B cell (primary cell): ENCODE measurements at regions of chr15 and their contacts with region 1.

Region 1: DNA sequence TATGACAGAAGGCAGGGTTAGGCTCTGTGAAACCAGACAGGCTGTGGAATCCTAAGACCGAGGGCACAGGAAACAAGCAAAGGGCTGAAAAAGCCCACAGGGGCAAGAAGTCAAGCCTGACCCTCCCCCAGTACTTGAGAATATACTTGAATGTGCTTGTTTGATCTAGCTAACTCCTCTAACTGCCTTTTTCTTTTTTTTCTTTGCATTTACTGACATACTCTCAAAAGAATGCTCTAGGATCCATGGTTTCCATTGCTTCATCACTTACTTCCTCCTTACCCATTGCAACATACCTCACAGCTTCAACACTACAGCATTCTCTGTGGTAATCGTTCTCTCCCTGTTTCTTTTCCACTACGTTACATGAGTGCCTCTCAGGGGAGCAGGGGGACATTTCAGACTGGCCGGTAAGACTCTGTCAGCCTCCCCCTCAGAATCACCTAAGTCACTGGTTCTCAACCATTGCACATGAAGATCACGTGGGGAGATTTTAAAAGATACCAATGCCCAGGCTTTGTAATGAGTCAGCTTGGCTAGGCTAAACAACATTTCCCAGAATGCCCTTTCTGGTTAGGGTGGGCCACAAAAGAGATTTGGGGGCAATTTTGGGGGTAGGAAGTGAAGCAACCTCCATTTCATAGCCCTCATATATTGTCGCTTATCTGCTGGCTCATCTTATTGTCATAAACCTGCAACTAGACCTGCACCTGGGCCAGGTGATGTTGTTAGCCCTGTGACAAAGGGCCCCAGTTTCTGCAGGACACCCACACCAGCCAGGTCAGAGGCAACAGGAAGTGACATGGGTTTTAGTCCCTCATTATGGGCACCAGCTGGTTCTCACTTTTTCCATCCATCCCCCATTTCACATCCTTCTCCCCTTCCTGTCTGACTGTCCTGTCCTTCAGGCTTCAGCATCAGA is 24.6 kb upstream of the RSL24D1 start:
- DNase-seq: peak; percentile 33
- ATAC-seq: peak; percentile 25
- H3K4me3 ChIP-seq: no peak overlapping the region
- H3K4me3 Mint-ChIP-seq: peak overlapping the region; percentile 30
- H3K27ac ChIP-seq: no peak overlapping the region
- H3K27ac Mint-ChIP-seq: peak overlapping the region; percentile 10
- H3K4me1 ChIP-seq: peaks cover 54 to 58% of the 10 kb centered on the region in 2 donors
- H3K4me1 Mint-ChIP-seq: peaks cover 58% of the 10 kb centered on the region
- H3K27me3 ChIP-seq: no peaks in the 10 kb centered on the region
- H3K27me3 Mint-ChIP-seq: no peaks in the 10 kb centered on the region
- CTCF ChIP-seq: no peak

Region 2: DNA sequence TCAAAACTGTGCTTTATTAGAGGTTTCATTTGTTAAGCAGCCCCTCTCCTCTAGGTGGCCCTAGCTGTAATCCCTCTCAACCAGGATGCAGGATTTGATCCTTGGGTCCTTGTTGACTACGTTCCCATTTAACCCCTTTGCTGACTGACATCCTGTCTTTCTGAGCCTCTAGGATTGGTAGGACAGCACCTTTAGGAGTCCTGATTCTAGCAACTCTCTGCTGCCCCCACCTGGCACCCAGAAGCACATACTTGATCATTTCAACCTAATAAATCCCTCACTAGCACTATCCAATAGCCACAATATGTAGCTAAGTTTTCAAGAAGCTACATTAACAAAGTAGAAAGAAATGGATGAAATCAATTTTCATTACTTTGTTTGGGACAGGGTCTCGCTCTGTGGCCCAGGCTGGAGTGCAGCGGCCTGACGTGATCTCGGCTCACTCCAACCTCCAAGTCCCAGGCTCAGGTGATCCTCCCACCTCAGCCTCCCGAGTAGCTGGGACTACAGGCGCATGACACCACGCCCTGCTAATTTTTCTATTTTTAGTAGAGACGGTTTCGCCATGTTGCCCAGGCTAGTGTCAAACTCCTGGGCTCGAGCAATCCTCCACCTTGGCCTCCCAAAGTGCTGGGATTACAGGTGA is 52.9 kb before region 1 on chr15:
- CTCF ChIA-PET with region 1: no interaction called
- POLR2A ChIA-PET with region 1: no interaction called
- intact Hi-C with region 1: no loop called
- DNase-seq: peak; percentile 50
- ATAC-seq: peak; percentile 54
- H3K4me3 ChIP-seq: no peak overlapping the region
- H3K4me3 Mint-ChIP-seq: no peak overlapping the region
- H3K27ac ChIP-seq: no peak overlapping the region
- H3K27ac Mint-ChIP-seq: no peak overlapping the region
- H3K4me1 ChIP-seq: no peaks in the 10 kb centered on the region
- H3K4me1 Mint-ChIP-seq: no peaks in the 10 kb centered on the region
- H3K27me3 ChIP-seq: no peaks in the 10 kb centered on the region
- H3K27me3 Mint-ChIP-seq: no peaks in the 10 kb centered on the region
- CTCF ChIP-seq: peak; percentile 82

Region 3: DNA sequence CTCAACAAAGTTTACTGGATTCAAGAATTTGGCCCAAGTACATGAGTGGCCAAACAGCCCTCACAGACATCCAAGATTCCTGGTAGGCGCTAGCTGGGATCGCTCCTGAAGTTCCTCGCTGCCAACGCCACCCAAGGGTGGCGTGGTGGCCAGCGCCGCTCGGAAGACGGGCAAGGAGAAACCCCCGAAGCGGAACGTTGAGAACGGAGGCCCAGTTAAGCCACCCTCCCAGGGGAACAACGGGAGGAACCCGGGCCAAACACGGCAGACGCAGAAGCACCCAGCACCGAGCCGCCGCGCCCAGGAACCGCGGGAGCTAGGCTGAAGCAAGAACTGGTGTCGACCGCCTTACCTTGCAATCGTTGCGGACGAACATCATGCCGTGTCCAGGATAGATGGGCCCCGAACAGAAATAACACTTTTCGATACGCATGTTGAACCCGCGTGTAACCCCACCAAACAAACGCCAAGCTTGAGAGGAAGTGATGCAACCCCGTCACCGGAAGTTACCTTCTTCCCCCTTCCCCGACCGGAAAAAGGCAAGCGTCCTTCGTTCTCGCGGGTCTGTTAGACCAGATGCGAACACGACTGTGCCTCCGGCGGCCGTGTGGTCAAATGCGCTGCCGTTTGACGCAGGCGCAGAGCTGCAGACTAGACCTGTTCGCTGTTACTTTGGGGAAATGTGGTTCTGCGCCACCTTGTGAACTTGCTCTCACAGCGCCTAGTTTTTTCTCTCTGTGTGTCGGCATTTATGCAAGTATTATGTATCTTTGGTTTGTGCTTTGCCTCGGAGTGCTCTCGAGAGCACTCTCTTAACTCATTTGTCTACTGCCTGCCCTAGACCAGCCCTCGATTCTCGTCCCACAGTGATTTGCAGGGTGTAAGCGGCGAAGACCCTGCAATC is 24.6 kb before region 1 on chr15 and contains the start of gene RSL24D1:
- CTCF ChIA-PET with region 1: interaction called, 13 read pairs
- POLR2A ChIA-PET with region 1: no interaction called
- intact Hi-C with region 1: loop called (anchors 1 kb)
- DNase-seq: peak; percentile 98
- ATAC-seq: peak; percentile 95
- H3K4me3 ChIP-seq: peak within 1 kb of the TSS; percentile 78 to 97 (median 90)
- H3K4me3 Mint-ChIP-seq: no peak within 1 kb of the TSS
- H3K27ac ChIP-seq: peak within 1 kb of the TSS; percentile 92
- H3K27ac Mint-ChIP-seq: no peak within 1 kb of the TSS
- H3K4me1 ChIP-seq: peaks cover 29 to 30% of the 10 kb centered on the region in 2 donors
- H3K4me1 Mint-ChIP-seq: peaks cover 9% of the 10 kb centered on the region
- H3K27me3 ChIP-seq: no peaks in the 10 kb centered on the region
- H3K27me3 Mint-ChIP-seq: no peaks in the 10 kb centered on the region
- CTCF ChIP-seq: peak; percentile 67
- total RNA-seq, gene RSL24D1: 69.0 and 80.7 TPM in 2 replicates

Region 4: GRCh38 chr15:55255714-55256113 is 34.4 kb after region 1 on chr15:
- CTCF ChIA-PET with region 1: interaction called, 3 read pairs
- POLR2A ChIA-PET with region 1: interaction called, 8 read pairs
- intact Hi-C with region 1: loop called (anchors 5 kb)
- DNase-seq: peak; percentile 51
- ATAC-seq: no peak
- H3K4me3 ChIP-seq: peak overlapping the region in 4 of 5 experiments; percentile 30 to 68 (median 52)
- H3K4me3 Mint-ChIP-seq: peak overlapping the region; percentile 88
- H3K27ac ChIP-seq: peak overlapping the region; percentile 54 to 74
- H3K27ac Mint-ChIP-seq: peak overlapping the region; percentile 84
- H3K4me1 ChIP-seq: peaks cover 47 to 54% of the 10 kb centered on the region in 2 donors
- H3K4me1 Mint-ChIP-seq: peaks cover 61% of the 10 kb centered on the region
- H3K27me3 ChIP-seq: no peaks in the 10 kb centered on the region
- H3K27me3 Mint-ChIP-seq: no peaks in the 10 kb centered on the region
- CTCF ChIP-seq: no peak

Region 5: DNA sequence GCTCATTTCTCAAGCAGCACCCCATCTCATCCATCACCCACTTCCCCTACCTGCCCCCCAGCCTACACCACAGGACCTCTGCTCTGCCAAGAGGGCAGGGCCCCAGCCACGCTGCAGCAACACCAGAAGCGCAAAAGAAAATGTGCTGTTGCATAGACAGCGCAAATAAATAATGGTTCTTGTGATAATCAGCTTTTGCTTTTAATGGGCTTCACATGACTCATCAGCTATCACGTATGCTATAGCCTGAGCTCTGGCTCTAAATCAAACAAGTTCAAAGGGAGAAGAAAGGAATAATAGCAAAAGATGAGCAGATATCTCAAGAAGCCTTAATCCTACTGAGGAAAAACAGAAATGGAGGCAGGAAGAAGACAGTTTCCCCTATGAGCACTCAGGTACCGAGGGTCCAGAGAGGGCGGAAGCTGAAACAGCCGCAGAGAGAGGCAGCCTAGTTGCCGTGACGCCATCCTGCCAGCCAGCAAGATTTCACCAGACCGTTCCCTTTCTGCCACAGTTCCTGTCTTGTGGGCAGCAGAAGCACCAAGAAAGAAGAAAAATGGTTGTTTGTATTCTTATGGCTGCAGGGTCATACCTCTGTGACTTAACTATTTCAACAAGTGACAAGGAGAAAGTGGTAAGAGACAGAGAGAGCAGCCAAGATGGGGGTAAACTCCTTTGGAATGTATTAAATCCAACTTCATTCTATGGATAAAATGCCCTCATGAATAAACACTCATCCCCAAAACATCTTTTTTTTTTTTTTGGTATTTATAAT is 46.2 kb after region 1 on chr15:
- CTCF ChIA-PET with region 1: interaction called, 21 read pairs
- POLR2A ChIA-PET with region 1: no interaction called
- intact Hi-C with region 1: no loop called
- DNase-seq: peak; percentile 80
- ATAC-seq: peak; percentile 97
- H3K4me3 ChIP-seq: peak overlapping the region; percentile 7 to 70 (median 46)
- H3K4me3 Mint-ChIP-seq: peak overlapping the region; percentile 75
- H3K27ac ChIP-seq: peak overlapping the region; percentile 73 to 90
- H3K27ac Mint-ChIP-seq: peak overlapping the region; percentile 89
- H3K4me1 ChIP-seq: peaks cover 21% of the 10 kb centered on the region in 2 donors
- H3K4me1 Mint-ChIP-seq: peaks cover 29% of the 10 kb centered on the region
- H3K27me3 ChIP-seq: no peaks in the 10 kb centered on the region
- H3K27me3 Mint-ChIP-seq: no peaks in the 10 kb centered on the region
- CTCF ChIP-seq: no peak

Region 6: GRCh38 chr15:55407949-55408791 is 186.8 kb after region 1 on chr15 and contains the starts of genes CCPG1 and PIERCE2:
- CTCF ChIA-PET with region 1: interaction called, 6 read pairs
- POLR2A ChIA-PET with region 1: no interaction called
- intact Hi-C with region 1: loop called (anchors 1 kb)
- DNase-seq: peak; percentile 93
- ATAC-seq: peak; percentile 94
- H3K4me3 ChIP-seq: peak within 1 kb of the TSS; percentile 73 to 90 (median 77)
- H3K4me3 Mint-ChIP-seq: peak within 1 kb of the TSS; percentile 96
- H3K27ac ChIP-seq: peak within 1 kb of the TSS; percentile 90 to 94
- H3K27ac Mint-ChIP-seq: peak within 1 kb of the TSS; percentile 92
- H3K4me1 ChIP-seq: peaks cover 19 to 24% of the 10 kb centered on the region in 2 donors
- H3K4me1 Mint-ChIP-seq: peaks cover 27% of the 10 kb centered on the region
- H3K27me3 ChIP-seq: no peaks in the 10 kb centered on the region
- H3K27me3 Mint-ChIP-seq: no peaks in the 10 kb centered on the region
- CTCF ChIP-seq: peak; percentile 92
- total RNA-seq, gene CCPG1: 32.1 and 36.0 TPM in 2 replicates
- total RNA-seq, gene PIERCE2: 1.2 and 1.8 TPM in 2 replicates

Region 7: GRCh38 chr15:55434989-55435825 is 213.9 kb after region 1 on chr15:
- CTCF ChIA-PET with region 1: interaction called, 49 read pairs
- POLR2A ChIA-PET with region 1: no interaction called
- intact Hi-C with region 1: loop called (anchors 1 kb)
- DNase-seq: peak; percentile 57
- ATAC-seq: peak; percentile 33
- H3K4me3 ChIP-seq: no peak overlapping the region
- H3K4me3 Mint-ChIP-seq: no peak overlapping the region
- H3K27ac ChIP-seq: no peak overlapping the region
- H3K27ac Mint-ChIP-seq: no peak overlapping the region
- H3K4me1 ChIP-seq: no peaks in the 10 kb centered on the region
- H3K4me1 Mint-ChIP-seq: no peaks in the 10 kb centered on the region
- H3K27me3 ChIP-seq: no peaks in the 10 kb centered on the region
- H3K27me3 Mint-ChIP-seq: no peaks in the 10 kb centered on the region
- CTCF ChIP-seq: peak; percentile 69